CD4-positive, alpha-beta memory T cell (primary cell): ENCODE measurements at regions of chr21 and their contacts with region 1.

Region 1: DNA sequence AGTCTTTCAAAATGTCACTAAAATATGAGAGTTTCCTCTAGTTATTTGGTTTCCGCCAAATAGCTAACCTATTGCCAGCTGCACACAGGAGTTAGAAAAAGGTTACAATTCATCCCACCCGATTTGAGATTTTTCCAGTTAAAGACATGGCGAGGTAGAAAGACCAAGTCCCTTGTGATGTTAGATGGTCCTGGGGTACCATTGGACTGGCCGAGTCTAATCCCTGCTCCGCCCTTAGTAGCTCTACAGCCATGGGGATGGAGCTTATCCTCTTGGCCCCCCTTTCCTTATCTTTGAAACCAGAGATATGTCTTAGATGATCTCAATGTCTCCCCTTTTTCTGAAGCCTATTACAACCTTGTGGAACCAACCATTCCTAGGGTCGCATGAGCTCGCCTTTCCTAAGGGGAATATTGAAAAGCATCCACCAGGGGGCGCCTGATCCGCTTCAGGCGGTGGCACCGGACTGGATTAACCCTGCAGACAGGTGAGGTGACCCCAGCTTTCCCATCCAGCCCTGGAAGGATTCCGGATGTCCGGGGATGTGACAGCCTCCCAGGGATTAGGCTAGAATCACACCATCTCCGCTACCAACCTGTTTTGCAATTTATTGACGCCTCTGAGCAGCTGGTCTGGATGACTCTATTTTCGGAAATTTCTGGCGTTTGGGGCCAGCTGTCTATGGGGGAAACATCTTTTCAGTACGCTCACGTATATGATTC is 68.3 kb upstream of the SIM2 start:
- DNase-seq: peak in 4 of 5 donors; percentile 25 to 41 (median 30)
- H3K4me3 ChIP-seq: no peak overlapping the region
- H3K4me3 Mint-ChIP-seq: no peak overlapping the region
- H3K27ac ChIP-seq: no peak overlapping the region
- H3K27ac Mint-ChIP-seq: no peak overlapping the region
- H3K4me1 ChIP-seq: no peaks in the 10 kb centered on the region
- H3K4me1 Mint-ChIP-seq: no peaks in the 10 kb centered on the region
- H3K27me3 ChIP-seq: no peaks in the 10 kb centered on the region
- H3K27me3 Mint-ChIP-seq: peaks cover 6 to 19% of the 10 kb centered on the region in 2 donors

Region 2: DNA sequence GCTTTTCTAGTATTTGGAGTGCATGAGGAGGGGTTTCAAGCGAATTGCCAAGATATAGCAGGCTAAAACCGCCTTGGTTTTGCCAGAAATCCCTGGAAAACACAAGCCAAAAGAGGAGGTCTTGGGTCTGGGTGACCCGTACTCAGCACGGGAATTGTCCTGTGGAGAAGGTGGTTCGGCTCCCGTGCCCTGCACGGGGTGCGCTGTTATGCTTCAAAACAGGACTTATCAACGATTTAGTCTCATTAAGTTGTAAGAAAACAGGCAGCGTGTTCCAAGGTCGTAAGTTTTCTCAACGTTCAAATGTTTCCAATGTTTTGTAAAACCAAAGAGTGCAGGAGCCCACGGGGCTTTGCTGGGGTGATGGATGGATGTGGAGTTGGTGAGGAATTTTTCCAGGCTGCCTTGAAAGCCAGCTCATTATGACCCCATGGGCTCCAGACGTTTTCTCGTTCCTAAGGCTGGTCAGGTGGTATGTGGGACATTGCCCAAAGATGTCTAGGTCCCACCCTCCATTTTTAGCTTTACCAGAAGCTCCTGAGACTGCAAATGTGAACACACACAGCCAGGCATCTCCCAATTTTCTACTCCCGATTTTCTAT is 75.3 kb before region 1 on chr21:
- CTCF ChIA-PET with region 1: no interaction called
- POLR2A ChIA-PET with region 1: no interaction called
- intact Hi-C with region 1: no loop called
- DNase-seq: no peak
- H3K4me3 ChIP-seq: no peak overlapping the region
- H3K4me3 Mint-ChIP-seq: no peak overlapping the region
- H3K27ac ChIP-seq: no peak overlapping the region
- H3K27ac Mint-ChIP-seq: no peak overlapping the region
- H3K4me1 ChIP-seq: no peaks in the 10 kb centered on the region
- H3K4me1 Mint-ChIP-seq: no peaks in the 10 kb centered on the region
- H3K27me3 ChIP-seq: no peaks in the 10 kb centered on the region
- H3K27me3 Mint-ChIP-seq: peaks cover 4 to 9% of the 10 kb centered on the region in 2 donors

Region 3: GRCh38 chr21:36585543-36585940 is 45.1 kb before region 1 on chr21:
- CTCF ChIA-PET with region 1: no interaction called
- POLR2A ChIA-PET with region 1: no interaction called
- intact Hi-C with region 1: no loop called
- DNase-seq: no peak
- H3K4me3 ChIP-seq: no peak overlapping the region
- H3K4me3 Mint-ChIP-seq: no peak overlapping the region
- H3K27ac ChIP-seq: no peak overlapping the region
- H3K27ac Mint-ChIP-seq: no peak overlapping the region
- H3K4me1 ChIP-seq: no peaks in the 10 kb centered on the region
- H3K4me1 Mint-ChIP-seq: no peaks in the 10 kb centered on the region
- H3K27me3 ChIP-seq: no peaks in the 10 kb centered on the region
- H3K27me3 Mint-ChIP-seq: peaks cover 7 to 17% of the 10 kb centered on the region in 2 donors

Region 4: GRCh38 chr21:36596218-36596617 is 34.4 kb before region 1 on chr21:
- CTCF ChIA-PET with region 1: no interaction called
- POLR2A ChIA-PET with region 1: no interaction called
- intact Hi-C with region 1: no loop called
- DNase-seq: no peak
- H3K4me3 ChIP-seq: no peak overlapping the region
- H3K4me3 Mint-ChIP-seq: no peak overlapping the region
- H3K27ac ChIP-seq: no peak overlapping the region
- H3K27ac Mint-ChIP-seq: no peak overlapping the region
- H3K4me1 ChIP-seq: no peaks in the 10 kb centered on the region
- H3K4me1 Mint-ChIP-seq: no peaks in the 10 kb centered on the region
- H3K27me3 ChIP-seq: no peaks in the 10 kb centered on the region
- H3K27me3 Mint-ChIP-seq: peaks cover 17 to 41% of the 10 kb centered on the region in 2 donors

Region 5: GRCh38 chr21:36640721-36641244 is 10.1 kb after region 1 on chr21:
- CTCF ChIA-PET with region 1: interaction called, 29 read pairs
- POLR2A ChIA-PET with region 1: no interaction called
- intact Hi-C with region 1: no loop called
- DNase-seq: no peak
- H3K4me3 ChIP-seq: no peak overlapping the region
- H3K4me3 Mint-ChIP-seq: no peak overlapping the region
- H3K27ac ChIP-seq: no peak overlapping the region
- H3K27ac Mint-ChIP-seq: no peak overlapping the region
- H3K4me1 ChIP-seq: no peaks in the 10 kb centered on the region
- H3K4me1 Mint-ChIP-seq: no peaks in the 10 kb centered on the region
- H3K27me3 ChIP-seq: no peaks in the 10 kb centered on the region
- H3K27me3 Mint-ChIP-seq: peaks cover 6 to 11% of the 10 kb centered on the region in 2 donors

Region 6: DNA sequence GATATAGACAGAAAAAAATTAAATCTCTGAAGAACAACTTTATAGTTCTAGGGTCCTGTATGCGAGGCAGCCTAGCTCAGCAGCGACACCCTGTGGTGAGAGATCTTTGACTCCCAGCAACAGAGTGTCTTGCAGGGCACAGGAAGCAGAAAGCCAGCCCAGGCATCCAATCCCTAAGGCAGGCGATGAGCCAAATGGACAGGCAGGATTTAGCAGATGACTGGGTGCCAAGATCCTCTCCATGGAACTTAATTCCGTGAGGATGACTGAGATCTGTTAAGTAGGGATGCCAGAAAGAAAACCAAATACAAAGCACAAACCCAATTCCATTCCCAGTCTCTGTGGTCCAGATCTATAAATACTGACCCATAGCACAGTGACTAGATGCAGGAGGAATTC is 297.1 kb after region 1 on chr21:
- CTCF ChIA-PET with region 1: interaction called, 44 read pairs
- POLR2A ChIA-PET with region 1: no interaction called
- intact Hi-C with region 1: loop called (anchors 1 kb)
- DNase-seq: peak; percentile 36 to 48 (median 43)
- H3K4me3 ChIP-seq: no peak overlapping the region
- H3K4me3 Mint-ChIP-seq: no peak overlapping the region
- H3K27ac ChIP-seq: no peak overlapping the region
- H3K27ac Mint-ChIP-seq: no peak overlapping the region
- H3K4me1 ChIP-seq: no peaks in the 10 kb centered on the region
- H3K4me1 Mint-ChIP-seq: peaks cover 0 to 11% (median 3%) of the 10 kb centered on the region in 4 donors
- H3K27me3 ChIP-seq: no peaks in the 10 kb centered on the region
- H3K27me3 Mint-ChIP-seq: no peaks in the 10 kb centered on the region